ENCODE measurements at regions of chr10 and their contacts with region 1.

Region 1: DNA sequence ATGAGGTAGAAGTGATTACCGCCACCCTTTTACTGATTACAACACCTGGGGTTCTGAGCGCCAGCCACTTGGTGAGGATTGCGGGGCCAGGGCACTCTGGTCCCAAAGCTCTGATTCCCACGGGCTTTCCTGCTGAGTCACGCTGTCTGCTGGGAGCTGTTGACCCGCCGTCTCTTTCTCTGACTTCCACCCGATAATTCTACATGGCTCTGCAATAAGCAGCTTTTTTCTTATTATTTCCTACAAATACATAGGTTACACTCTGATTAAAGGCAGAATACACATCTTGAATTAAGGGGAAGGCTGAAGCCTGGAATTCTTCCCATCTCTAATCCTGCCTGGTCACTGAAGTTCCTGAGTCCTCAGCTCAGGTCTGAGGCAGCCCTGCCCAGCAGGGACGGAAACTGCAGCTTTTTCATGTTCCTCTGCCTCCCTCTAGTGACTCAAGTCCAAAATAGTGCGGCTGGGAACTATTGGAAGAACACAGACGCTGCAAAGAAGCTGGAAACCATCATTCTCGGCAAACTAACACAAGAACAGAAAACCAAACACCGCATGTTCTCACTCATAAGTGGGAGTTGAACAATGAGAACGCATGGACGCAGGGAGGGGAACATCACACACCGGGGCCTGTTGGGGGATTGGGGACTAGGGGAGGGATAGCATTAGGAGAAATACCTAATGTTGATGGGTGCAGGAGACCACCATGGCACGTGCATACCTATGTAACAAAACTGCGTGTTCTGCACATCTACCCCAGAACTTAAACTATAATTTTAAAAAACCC is 178.3 kb downstream of the PRKCQ start:
- DNase-seq: peak; percentile 75
- ATAC-seq: peak; percentile 96

Region 2: DNA sequence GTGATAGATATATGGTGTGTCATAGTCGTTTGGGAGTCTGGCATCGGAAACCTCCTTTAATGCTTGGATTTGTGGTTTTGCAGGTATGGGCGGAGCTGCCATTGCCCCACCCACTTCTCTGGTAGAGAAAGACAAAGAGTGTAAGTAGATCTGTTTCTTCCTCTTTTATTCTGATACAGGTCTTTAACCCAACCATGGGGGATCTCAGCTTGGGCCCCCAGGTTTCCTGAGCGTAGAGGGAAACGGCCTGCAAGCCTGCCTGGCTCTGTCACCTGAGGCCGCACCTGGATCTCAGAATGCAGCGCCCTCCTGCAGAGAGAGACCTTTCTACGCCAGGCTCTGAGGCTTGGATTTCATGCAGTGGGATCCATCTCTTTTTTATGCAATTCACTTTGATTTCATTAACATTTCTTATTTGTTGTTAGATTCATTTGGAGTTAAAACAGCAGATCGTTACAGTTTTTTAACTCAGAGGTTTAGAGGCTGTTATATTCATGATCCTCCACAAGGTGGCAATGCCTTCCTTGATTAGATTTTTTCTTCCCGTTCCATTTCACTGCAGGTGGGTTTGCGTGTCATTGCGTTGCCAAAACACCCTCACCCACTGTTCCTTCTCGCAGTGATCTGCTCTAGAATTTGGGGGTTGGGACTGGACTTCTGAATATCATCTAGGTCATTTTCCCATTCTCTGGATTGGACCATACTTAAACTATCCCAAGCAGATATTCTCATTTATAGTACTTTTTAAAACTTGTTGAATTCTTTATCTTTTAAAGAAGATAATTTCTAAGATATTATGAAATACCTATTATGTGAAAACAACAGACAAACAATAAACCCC is 292.9 kb before region 1 on chr10:
- intact Hi-C with region 1: loop called (anchors 5 kb)
- DNase-seq: no peak
- ATAC-seq: no peak

Region 3: DNA sequence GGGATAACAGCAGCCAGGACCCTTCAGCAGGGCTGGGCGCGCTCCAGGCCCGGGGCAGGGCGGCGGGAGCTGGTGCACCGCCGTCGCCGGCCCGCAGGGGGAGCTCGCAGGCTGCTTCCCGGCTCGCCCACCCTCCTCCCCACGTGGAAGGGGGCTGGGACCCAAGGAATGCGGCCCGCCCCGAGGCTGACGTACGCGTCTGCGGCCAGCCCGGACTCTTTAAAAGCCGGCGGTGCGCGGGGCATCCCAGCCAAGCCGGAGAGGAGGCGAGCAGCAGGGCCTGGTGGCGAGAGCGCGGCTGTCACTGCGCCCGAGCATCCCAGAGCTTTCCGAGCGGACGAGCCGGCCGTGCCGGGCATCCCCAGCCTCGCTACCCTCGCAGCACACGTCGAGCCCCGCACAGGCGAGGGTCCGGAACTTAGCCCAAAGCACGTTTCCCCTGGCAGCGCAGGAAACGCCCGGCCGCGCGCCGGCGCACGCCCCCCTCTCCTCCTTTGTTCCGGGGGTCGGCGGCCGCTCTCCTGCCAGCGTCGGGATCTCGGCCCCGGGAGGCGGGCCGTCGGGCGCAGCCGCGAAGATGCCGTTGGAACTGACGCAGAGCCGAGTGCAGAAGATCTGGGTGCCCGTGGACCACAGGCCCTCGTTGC is 198.9 kb before region 1 on chr10 and contains the start of gene PFKFB3:
- intact Hi-C with region 1: loop called (anchors 10 kb)
- DNase-seq: peak; percentile 98
- ATAC-seq: peak; percentile 96
- total RNA-seq, gene PFKFB3: 87.7 TPM

Region 4: DNA sequence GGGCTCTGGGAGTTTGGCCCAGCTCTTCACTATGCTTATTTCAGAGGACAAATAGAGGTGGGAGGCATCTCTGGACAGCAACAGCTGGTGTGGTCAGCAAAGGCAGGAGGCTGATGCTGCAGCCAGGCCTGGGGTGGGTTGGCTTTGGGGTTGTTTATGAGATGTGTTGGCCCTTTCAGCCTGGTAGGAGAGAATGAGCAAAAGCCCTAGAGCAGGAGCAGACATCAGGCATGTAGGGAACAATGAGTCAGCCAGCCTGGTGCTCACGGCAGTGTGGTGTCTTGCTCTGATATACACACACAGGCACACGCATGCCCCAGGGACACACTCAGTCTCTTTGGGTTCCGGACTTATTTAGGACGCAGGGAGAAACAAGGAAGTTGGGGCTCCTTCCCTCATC is 21.2 kb after region 1 on chr10:
- intact Hi-C with region 1: no loop called
- DNase-seq: no peak
- ATAC-seq: no peak

Region 5: GRCh38 chr10:6603142-6604125 is 201.7 kb after region 1 on chr10:
- intact Hi-C with region 1: no loop called
- DNase-seq: no peak
- ATAC-seq: no peak

Measured in sciatic nerve (tissue), 2 donors.